Spleen (tissue), 13 donors: ENCODE measurements at regions of chr12 and their contacts with region 1.

Region 1: DNA sequence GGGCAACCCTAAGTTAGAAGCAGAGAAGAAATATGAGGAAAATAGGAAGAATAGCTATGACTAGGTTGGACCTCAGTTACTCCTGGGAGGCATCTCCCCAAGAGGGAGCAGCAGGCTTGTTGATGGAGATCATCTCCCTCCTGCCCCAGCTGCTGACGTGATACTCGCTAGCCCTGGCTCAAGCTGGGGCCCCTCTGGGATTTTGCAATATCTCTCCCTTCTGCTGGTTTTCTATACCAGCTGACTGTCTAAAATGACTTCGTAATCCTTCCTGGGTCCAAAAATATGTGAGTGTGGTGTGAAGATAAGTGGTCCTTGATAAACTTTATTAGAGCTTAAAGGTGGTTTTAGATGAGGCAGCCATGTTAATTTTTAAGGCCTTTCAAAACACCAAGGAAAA is 4.5 kb upstream of the HECTD4 start:
- DNase-seq: no peak
- H3K4me3 ChIP-seq: no peak overlapping the region
- H3K27ac ChIP-seq: no peak overlapping the region
- H3K4me1 ChIP-seq: peaks cover 0 to 23% (median 14%) of the 10 kb centered on the region in 6 donors
- H3K27me3 ChIP-seq: peaks cover 0 to 10% (median 0%) of the 10 kb centered on the region in 7 donors
- CTCF ChIP-seq: no peak
- POLR2A ChIP-seq: no peak

Region 2: GRCh38 chr12:112198120-112198733 is 188.5 kb before region 1 on chr12:
- intact Hi-C with region 1: loop called (anchors 5 kb)
- DNase-seq: peak; percentile 77
- H3K4me3 ChIP-seq: no peak overlapping the region
- H3K27ac ChIP-seq: no peak overlapping the region
- H3K4me1 ChIP-seq: no peaks in the 10 kb centered on the region
- H3K27me3 ChIP-seq: no peaks in the 10 kb centered on the region
- CTCF ChIP-seq: peak in 9 of 11 experiments; percentile 34 to 68 (median 44)
- POLR2A ChIP-seq: no peak

Region 3: DNA sequence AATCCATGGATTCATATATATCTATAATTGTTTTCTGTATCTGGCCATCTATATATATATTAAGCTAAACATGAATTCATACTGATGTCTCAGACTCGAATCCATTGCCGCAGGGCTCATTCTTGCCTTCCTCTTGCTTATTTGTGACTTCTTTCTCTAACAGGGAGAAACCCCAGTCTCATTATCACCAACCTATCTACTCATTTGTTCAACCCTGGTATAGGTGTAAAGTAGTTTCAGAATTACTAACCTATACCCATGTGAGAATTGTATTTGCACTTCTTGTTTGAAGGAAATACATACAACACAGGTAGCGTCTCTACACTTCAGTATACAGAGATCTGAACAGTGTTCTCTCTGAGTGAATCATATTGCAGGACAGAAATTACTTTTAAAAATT is 109.8 kb after region 1 on chr12:
- intact Hi-C with region 1: no loop called
- DNase-seq: no peak
- H3K4me3 ChIP-seq: no peak overlapping the region
- H3K27ac ChIP-seq: no peak overlapping the region
- H3K4me1 ChIP-seq: no peaks in the 10 kb centered on the region
- H3K27me3 ChIP-seq: no peaks in the 10 kb centered on the region
- CTCF ChIP-seq: no peak
- POLR2A ChIP-seq: no peak

Region 4: DNA sequence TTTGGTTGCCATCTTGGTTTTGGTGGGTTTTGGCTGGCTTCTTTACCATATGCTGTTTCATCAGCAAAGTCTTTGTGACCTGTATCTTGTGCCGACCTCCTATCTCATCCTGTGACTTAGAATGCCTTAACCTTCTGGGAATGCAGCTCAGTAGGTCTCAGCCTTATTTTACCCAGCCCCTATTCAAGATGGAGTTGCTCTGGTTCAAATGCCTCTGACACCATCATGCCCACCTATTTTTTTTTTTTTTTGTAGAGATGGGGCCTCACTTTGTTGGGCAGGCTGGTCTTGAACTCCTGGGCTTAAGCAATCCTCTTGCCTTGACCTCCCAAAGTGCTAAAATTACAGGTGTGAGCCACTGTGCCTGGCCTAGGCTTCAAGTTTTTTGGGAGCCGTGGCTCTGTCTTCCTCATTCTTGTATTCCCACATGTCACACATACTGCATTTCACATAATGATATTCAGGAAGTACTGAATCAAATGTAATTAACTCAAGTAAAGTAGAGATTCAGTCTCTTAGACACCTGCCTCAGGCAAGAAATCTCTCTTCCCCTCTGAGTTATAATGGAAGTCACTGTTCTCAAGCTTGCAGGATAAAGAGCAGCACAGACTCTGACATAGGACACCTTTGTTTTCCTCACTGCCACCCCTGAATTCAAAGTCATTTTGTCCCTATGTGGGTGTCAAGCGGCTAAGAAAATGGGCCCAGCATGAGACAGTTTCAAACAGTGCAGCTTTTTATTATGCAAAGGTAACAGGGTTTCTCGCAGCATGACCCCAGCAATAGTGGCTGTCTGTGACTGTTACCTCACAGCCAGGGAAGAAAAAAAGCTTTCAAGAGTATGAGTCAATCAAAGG is 191.0 kb after region 1 on chr12:
- intact Hi-C with region 1: no loop called
- DNase-seq: no peak
- H3K4me3 ChIP-seq: no peak overlapping the region
- H3K27ac ChIP-seq: no peak overlapping the region
- H3K4me1 ChIP-seq: peaks cover 0 to 5% (median 0%) of the 10 kb centered on the region in 6 donors
- H3K27me3 ChIP-seq: peaks cover 0 to 63% (median 14%) of the 10 kb centered on the region in 7 donors
- CTCF ChIP-seq: no peak
- POLR2A ChIP-seq: no peak